ENCODE measurements at regions of chr3 and their contacts with region 1.

Region 1: DNA sequence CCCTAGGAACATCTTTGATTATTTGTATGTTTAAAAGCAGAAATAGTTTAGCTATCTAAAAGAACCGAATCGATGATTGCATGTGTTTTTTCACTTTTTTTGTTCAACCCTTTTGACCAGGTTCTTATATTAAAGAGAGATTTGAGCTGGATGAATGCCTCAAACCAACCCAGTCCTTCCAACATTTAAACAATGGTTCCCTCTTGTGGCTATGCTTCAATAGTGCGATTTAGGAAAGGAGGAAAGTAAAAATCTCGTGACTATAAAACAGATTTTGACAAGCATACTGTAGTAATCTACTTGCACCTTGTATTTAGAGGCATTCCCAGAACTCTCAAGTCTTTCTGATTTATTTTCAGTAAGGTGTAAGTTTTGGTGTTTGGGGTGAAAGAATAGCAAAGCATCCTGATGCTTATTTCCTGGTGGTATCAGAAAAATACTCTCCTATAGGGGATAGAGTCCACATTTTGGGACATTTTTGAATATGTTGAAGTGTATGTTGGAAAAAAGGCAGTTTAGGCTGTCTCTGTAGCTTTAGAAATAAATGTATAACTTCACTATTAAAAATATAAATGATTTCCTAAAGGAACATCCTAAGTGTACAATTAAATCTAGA is 159.6 kb upstream of the KCNH8 start:
- DNase-seq: no peak
- ATAC-seq: peak; percentile 64
- H3K4me3 Mint-ChIP-seq: peak overlapping the region; percentile 44
- H3K27ac Mint-ChIP-seq: no peak overlapping the region
- H3K4me1 Mint-ChIP-seq: peaks cover 19% of the 10 kb centered on the region
- H3K27me3 Mint-ChIP-seq: peaks cover 9% of the 10 kb centered on the region

Region 2: DNA sequence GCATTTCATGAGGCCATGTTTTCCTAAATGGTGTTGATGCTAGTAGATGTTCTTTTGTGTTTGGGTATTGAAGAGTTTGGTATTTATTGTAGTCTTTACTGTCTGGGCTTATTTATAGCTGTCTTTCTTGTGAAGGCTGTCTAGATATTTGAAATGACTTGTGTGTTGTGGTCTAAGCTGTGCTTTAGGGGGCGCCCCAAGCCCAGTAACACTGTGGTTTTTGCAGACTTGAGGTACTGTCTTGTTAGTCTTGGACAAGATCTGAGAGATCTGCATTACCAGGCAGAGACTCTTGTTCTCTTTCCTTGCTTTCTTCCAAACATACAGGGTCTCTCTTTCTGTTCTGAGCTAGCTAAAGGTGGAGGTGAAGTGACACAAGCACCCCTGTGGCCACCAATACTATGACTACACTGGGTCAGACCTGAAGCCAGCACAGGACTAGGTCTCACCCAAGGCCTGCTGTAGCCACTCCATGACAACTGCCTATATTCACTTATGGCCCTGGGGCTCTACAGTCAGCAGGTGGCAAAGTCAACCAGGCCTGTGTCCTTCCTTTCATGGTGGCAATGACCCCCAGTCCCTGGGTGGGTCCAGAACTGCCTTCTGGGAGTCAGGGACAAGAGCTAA is 1094.2 kb before region 1 on chr3:
- CTCF ChIA-PET with region 1: interaction called, 13 read pairs
- POLR2A ChIA-PET with region 1: no interaction called
- DNase-seq: peak; percentile 49
- ATAC-seq: peak; percentile 53
- H3K4me3 Mint-ChIP-seq: no peak overlapping the region
- H3K27ac Mint-ChIP-seq: no peak overlapping the region
- H3K4me1 Mint-ChIP-seq: no peaks in the 10 kb centered on the region
- H3K27me3 Mint-ChIP-seq: peaks cover 2% of the 10 kb centered on the region

Region 3: DNA sequence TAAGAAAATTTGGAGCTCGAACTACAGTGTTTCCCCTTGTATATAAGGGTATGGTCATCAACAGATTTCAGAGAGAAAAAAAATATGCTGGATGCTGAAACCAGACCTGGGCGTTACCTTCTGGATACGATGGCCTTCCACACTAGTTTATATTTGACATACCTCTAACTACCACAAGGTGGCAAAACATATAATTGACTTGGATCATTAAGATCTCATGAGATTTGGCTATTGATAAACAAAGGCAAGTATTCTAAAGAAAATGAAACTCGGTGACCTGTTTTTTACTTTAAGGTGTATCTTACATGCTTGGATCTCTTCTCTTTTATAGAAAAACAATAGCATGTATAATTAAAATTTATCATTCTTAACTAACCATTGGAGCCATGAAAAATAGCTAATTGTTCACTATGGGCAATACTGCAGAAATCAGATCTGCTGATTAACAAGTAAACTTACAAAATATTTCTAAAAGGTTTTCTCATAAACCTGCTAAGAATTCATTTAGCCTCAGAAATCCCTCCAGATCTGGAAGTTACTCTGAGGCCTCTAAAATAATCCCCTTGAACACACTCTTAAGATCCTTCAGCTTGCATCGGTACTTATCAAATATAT is 141.0 kb before region 1 on chr3:
- CTCF ChIA-PET with region 1: interaction called, 29 read pairs
- POLR2A ChIA-PET with region 1: no interaction called
- DNase-seq: no peak
- ATAC-seq: no peak
- H3K4me3 Mint-ChIP-seq: no peak overlapping the region
- H3K27ac Mint-ChIP-seq: no peak overlapping the region
- H3K4me1 Mint-ChIP-seq: peaks cover 9% of the 10 kb centered on the region
- H3K27me3 Mint-ChIP-seq: no peaks in the 10 kb centered on the region

Region 4: GRCh38 chr3:19124746-19125145 is 136.0 kb after region 1 on chr3:
- CTCF ChIA-PET with region 1: no interaction called
- POLR2A ChIA-PET with region 1: no interaction called
- DNase-seq: no peak
- ATAC-seq: no peak
- H3K4me3 Mint-ChIP-seq: no peak overlapping the region
- H3K27ac Mint-ChIP-seq: no peak overlapping the region
- H3K4me1 Mint-ChIP-seq: no peaks in the 10 kb centered on the region
- H3K27me3 Mint-ChIP-seq: peaks cover 2% of the 10 kb centered on the region